Right ventricle myocardium inferior (tissue), 1 donor: ENCODE measurements at regions of chr3 and their contacts with region 1.

Region 1: GRCh38 chr3:79973917-79974595 is 206.3 kb upstream of the ROBO1 start:
- DNase-seq: no peak
- ATAC-seq: peak; percentile 88

Region 2: DNA sequence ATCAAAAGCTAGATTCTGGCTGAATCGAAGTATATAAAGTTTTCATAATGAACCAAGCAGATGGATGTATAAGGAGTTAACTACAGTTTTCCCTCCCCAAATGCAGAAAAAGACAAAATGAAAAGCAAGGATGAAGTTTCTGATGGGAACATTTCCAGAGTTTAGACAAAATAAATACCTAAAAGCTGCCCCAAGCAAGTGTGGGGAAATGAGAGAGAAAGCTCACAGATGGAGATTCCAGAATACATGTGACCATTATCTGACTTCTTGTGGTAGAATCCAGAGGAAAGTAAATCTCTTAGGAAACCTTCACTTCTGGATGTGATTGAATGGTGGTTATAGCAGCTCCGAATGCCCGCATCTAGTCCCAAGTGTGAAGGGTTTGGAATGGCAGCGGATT is 30.6 kb after region 1 on chr3:
- intact Hi-C with region 1: loop called (anchors 5 kb)
- DNase-seq: no peak
- ATAC-seq: no peak

Region 3: GRCh38 chr3:80097674-80098073 is 123.6 kb after region 1 on chr3:
- intact Hi-C with region 1: no loop called
- DNase-seq: no peak
- ATAC-seq: no peak